ENCODE measurements at regions of chr12 and their contacts with region 1.

Region 1: DNA sequence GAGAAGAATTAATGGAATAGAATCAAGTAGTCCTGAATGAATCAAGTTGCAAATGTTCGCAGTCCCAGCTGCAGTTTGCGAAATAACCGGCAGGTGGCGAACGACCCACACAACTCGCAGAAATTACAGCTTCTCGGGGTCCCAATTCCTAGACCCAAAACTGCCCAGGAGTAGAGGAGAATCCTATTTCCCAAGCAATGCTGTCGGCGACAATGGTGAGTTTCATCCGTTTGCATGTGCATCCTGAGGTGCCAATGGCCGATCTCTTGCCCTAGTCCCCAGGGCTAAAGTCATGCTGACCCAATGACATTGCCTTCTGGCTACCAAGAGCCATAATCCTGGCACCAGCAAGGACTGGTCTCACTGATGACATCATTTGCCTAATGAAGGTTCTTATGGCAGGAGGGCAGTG is 8.5 kb upstream of the ASCL1 start:
- DNase-seq: no peak
- H3K4me3 ChIP-seq: no peak overlapping the region
- H3K27me3 ChIP-seq: peaks cover 10% of the 10 kb centered on the region
- CTCF ChIP-seq: peak; percentile 87

Region 2: GRCh38 chr12:102964872-102965271 is 15.9 kb after region 1 on chr12:
- CTCF ChIA-PET with region 1: interaction called, 14 read pairs
- POLR2A ChIA-PET with region 1: no interaction called
- DNase-seq: no peak
- H3K4me3 ChIP-seq: no peak overlapping the region
- H3K27me3 ChIP-seq: peaks cover 23% of the 10 kb centered on the region
- CTCF ChIP-seq: no peak